Posterior vena cava (tissue), 2 donors: ENCODE measurements at regions of chr2 and their contacts with region 1.

Region 1: DNA sequence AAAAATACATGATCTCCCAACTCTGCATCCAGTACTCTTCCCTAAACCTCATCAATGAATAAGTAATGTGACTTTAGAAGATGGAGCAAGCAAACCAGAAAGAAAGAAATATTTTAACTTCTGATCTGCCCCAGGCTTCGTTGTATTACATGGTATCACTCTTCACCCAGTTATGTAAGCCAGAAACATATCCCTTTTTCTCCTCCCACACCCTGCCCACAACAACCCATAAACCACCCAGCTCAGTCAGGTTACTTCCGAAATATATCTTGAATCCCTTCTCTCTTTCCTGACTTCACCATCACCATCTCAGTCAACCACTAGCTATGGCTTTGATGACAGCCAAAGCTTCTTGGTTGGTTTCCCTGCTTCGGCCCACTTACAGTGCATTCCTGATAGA is 295.8 kb upstream of the PARD3B start:
- DNase-seq: no peak

Region 2: DNA sequence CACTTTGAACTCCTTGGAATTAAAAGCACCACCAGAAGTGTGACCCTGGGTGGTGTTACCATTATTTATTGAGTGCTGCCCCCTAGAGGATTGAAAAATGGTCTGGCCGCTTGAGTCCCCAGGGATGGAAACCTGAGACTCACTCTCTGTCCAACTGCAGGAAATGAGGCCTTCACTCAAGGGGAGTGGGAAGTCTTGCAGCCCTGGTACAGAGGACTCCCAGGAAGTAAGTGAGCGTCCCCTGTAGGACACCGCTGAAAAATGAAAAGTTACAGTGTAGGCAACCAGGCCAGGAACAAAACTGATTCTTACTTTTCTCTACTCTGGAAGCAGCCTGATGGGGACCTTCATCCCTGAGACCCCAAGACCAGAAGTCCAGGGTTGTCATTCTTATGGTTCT is 1430.6 kb after region 1 on chr2:
- intact Hi-C with region 1: loop called in 1 of 2 experiments (anchors 5 kb)
- DNase-seq: no peak